Endothelial cell of umbilical vein (primary cell): ENCODE measurements at regions of chr2 and their contacts with region 1.

Region 1: DNA sequence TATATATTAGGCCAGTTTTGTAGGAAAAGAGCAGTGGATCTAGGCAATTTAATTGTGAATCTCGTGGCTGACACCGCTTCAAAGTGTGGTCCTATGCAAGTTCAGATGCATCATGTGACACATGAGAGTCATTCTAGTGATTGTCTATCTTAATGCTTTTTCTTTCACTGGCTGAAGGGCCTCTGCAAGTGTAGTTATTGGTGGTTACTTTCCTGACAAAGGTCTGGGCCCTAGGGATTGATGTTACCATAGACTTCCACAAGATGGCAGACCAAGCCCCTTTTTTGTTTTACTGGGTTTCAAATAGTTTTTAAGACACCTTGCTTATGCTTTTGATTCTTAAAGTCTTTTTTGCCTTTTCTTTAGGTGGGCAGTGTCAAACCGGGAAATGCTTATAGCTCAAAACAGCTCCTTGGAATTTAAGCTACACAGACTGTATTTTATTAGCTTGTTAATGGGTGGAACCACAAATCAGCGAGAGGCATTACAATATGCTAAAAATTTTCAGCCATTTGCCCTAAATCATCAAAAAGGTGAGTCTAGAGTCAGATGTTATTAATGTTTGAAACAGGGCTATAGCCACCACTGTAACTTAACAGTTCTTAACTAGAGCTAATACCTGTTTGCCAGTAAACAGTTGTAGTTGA is 25.9 kb downstream of the CD8A start:
- DNase-seq: peak; percentile 73
- H3K4me3 ChIP-seq: no peak overlapping the region
- H3K27ac ChIP-seq: no peak overlapping the region
- H3K4me1 ChIP-seq: no peaks in the 10 kb centered on the region
- H3K27me3 ChIP-seq: no peaks in the 10 kb centered on the region
- CTCF ChIP-seq: peak; percentile 57 to 59
- POLR2A ChIP-seq: no peak

Region 2: GRCh38 chr2:86211033-86211795 is 553.6 kb before region 1 on chr2:
- CTCF ChIA-PET with region 1: no interaction called
- POLR2A ChIA-PET with region 1: no interaction called
- dilution Hi-C with region 1: no loop called
- intact Hi-C with region 1: no loop called
- DNase-seq: no peak
- H3K4me3 ChIP-seq: no peak overlapping the region
- H3K27ac ChIP-seq: no peak overlapping the region
- H3K4me1 ChIP-seq: peaks cover 14% of the 10 kb centered on the region
- H3K27me3 ChIP-seq: no peaks in the 10 kb centered on the region
- CTCF ChIP-seq: no peak
- POLR2A ChIP-seq: no peak

Region 3: GRCh38 chr2:86487062-86487461 is 277.7 kb before region 1 on chr2:
- CTCF ChIA-PET with region 1: interaction called, 3 read pairs
- POLR2A ChIA-PET with region 1: no interaction called
- dilution Hi-C with region 1: no loop called
- intact Hi-C with region 1: loop called (anchors 1 kb)
- DNase-seq: no peak
- H3K4me3 ChIP-seq: no peak overlapping the region
- H3K27ac ChIP-seq: no peak overlapping the region
- H3K4me1 ChIP-seq: no peaks in the 10 kb centered on the region
- H3K27me3 ChIP-seq: no peaks in the 10 kb centered on the region
- CTCF ChIP-seq: no peak
- POLR2A ChIP-seq: no peak

Region 4: DNA sequence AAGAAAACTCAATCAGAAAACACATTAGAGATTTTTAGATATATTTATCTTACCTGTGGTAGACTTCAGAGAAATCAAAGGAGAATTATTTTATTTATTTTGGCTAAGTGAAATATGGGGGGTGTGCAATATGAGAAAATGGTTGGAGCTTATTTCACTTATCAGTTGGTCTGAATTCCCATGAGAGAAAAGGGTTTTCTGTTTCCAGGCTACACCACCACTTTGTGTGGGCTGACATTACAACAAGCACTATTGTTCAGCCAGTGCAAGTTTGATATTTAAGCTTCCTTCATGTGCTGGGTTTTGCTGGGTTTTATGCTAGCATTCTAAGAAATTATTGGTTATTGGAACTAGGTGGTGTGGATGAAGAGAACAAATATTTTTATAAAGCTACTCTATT is 11.2 kb before region 1 on chr2:
- CTCF ChIA-PET with region 1: interaction called, 17 read pairs
- POLR2A ChIA-PET with region 1: no interaction called
- dilution Hi-C with region 1: no loop called
- intact Hi-C with region 1: no loop called
- DNase-seq: no peak
- H3K4me3 ChIP-seq: no peak overlapping the region
- H3K27ac ChIP-seq: no peak overlapping the region
- H3K4me1 ChIP-seq: no peaks in the 10 kb centered on the region
- H3K27me3 ChIP-seq: no peaks in the 10 kb centered on the region
- CTCF ChIP-seq: no peak
- POLR2A ChIP-seq: no peak